Ovary (tissue), 10 donors: ENCODE measurements at regions of chr1 and their contacts with region 1.

Region 1: GRCh38 chr1:181347495-181348390 is 135.6 kb upstream of the CACNA1E start:
- DNase-seq: no peak
- H3K4me3 ChIP-seq: no peak overlapping the region
- H3K27ac ChIP-seq: no peak overlapping the region
- H3K4me1 ChIP-seq: no peaks in the 10 kb centered on the region
- H3K27me3 ChIP-seq: no peaks in the 10 kb centered on the region
- CTCF ChIP-seq: no peak
- EP300 ChIP-seq: no peak
- POLR2A ChIP-seq: no peak

Region 2: GRCh38 chr1:181778640-181779260 is 431.0 kb after region 1 on chr1:
- intact Hi-C with region 1: no loop called
- DNase-seq: no peak
- H3K4me3 ChIP-seq: no peak overlapping the region
- H3K27ac ChIP-seq: no peak overlapping the region
- H3K4me1 ChIP-seq: no peaks in the 10 kb centered on the region
- H3K27me3 ChIP-seq: no peaks in the 10 kb centered on the region
- CTCF ChIP-seq: no peak
- EP300 ChIP-seq: no peak
- POLR2A ChIP-seq: no peak

Region 3: DNA sequence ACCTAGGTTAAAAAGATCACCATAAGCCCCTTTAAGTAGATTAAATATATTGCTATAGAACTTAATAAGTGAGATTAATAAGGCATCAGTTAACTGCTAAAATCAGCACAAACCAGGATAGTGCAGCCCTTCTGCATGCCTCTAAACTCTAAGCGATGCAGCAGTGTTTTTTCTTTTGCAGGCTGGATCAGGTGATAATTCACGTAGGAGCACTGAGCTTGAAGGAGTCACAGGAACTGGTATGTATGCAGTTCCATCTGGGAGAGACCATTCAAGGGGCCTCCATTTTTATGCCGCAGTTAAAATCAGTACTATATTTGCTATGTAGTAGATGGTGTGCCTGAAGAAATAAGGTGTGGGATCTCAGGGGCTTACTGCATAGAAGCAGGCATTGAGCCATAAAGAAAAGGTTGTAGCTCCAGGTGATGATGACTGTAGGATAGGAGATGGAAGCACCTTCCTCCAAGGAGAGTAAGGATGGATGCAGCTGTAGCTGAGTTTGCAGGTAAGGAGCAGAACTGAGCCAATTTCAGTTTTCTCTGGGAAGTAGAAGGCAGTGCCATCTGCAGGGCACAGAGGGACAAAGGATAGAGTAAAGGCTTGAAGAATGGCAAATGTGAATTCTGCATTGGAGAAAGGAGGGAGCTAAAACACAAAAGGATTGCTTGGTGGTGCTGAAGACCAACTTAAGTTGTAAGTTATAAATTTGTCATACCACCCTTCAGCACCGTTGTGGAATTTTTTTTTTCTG is 1464.4 kb after region 1 on chr1:
- intact Hi-C with region 1: loop called in 1 of 4 experiments (anchors 5 kb)
- DNase-seq: no peak
- H3K4me3 ChIP-seq: no peak overlapping the region
- H3K27ac ChIP-seq: no peak overlapping the region
- H3K4me1 ChIP-seq: no peaks in the 10 kb centered on the region
- H3K27me3 ChIP-seq: no peaks in the 10 kb centered on the region
- CTCF ChIP-seq: no peak
- EP300 ChIP-seq: no peak
- POLR2A ChIP-seq: no peak